Posterior vena cava (tissue), 2 donors: ENCODE measurements at regions of chr17 and their contacts with region 1.

Region 1: GRCh38 chr17:66906321-66907278 is 57.9 kb upstream of the CACNG4 start:
- DNase-seq: peak; percentile 93

Region 2: DNA sequence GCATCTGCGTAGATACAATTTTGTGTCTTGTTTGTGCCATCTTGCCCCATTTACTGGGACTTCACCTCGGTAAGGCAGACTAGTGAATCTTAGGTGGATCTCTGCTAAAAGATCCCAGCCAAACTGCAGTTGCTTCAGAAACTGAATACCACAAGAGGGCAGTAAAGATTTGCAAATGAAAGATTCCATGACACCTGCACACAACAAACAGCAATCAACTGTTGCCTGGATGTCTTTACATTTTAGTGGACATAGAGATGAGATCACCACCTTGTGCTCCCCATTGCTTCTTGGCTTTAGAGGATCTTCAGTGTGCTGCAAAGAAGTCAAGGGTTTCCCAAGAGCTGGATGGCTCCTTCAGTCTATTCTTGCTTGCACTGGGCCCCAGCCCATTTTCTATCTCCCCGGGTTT is 190.8 kb before region 1 on chr17:
- intact Hi-C with region 1: loop called (anchors 5 kb)
- DNase-seq: no peak

Region 3: GRCh38 chr17:66727639-66728570 is 178.7 kb before region 1 on chr17:
- intact Hi-C with region 1: loop called in 1 of 2 experiments (anchors 5 kb)
- DNase-seq: peak; percentile 86

Region 4: DNA sequence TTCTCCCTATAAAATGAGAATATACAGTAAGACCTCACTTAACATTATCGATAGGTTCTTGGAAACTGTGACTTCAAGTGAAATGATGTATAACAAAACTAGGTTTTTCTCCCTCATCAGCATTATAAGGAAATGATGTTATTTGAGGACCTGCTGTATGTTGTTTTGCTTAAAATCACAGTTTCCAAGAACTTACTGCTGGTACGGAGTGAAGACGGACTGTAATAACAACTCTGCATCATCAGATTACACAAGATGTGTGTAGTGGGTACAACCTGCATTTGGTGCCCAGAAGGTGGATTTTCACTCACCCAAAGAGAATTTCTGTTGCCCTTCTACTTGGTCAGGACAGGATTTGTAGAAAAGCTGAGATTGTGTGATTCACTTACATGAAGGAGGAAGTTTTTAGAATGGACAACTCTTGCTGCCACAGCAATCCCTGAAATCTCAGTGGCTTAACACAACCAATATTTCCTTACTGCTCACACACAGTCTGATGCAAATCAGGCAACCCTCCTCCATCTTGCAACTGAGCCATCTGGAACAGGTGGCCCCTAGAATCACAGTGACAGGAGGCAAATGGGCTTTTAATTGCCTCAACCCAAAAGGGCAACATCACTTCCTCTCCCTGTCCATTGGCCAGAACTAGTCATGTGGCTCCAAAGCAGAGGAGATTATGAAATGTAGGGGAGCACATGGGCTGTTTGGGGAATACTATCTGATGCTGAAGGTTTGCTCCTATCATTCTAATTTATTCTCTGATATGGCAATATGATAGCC is 139.3 kb before region 1 on chr17:
- intact Hi-C with region 1: no loop called
- DNase-seq: no peak

Region 5: DNA sequence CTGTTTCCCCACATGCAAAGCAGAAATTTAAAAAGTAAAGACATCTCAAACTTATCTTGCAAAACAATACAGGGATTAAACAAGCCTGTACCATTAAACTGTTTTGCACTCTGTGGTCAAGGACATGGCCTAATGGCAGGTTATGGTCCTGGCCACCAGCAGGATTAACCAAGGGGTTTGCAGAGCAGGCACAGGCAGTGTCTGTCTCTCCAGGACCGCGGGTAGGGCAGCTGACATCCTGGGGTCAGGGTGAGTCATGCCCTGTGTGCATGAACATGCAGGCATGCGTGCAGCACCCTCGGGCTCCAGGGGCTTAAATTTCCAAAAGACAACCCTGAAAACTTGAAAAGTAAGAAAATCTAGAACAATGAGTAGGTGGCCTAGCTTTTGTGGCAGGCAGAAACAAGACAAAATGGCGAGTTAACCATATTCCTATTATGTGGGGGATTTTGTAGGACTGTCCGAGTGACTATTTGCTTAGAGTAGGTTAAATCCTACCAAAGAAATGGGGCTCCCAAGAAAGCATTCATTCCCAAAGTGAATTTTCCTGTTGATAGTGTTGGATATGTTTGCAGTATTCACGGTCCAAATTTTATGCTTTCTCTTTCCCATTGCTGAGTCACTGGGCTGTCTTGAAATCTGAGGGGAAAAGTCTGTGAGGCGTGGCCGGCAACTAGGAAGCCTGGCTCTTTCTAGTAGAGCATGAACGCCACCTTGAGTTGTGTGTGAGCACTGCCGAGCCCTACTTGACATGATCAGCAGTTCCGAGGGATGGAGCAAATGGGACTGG is 1852.9 kb after region 1 on chr17:
- intact Hi-C with region 1: loop called in 1 of 2 experiments (anchors 10 kb)
- DNase-seq: peak; percentile 94